CD4-positive, alpha-beta memory T cell (primary cell): ENCODE measurements at regions of chr12 and their contacts with region 1.

Region 1: DNA sequence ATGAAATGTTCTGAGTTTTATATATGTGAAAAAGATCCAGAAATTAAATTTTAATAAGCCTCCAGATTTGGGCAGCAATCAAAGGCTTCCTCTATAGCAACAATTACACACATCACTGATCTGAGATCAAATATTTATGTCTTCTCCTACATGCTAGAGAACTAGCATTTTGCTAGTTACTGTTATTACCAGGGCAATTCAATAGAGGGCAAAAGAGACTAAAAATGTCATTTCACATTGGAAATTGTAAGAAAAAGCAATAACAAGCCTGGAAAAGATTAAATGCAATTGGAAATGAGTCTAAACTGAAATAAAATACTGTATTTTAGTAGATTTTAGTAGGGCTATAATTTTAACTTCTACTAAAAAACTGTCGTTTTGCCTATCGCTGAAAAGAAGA is 32.6 kb upstream of the ANO6 start:
- DNase-seq: no peak
- H3K4me3 ChIP-seq: no peak overlapping the region
- H3K4me3 Mint-ChIP-seq: no peak overlapping the region
- H3K27ac ChIP-seq: no peak overlapping the region
- H3K27ac Mint-ChIP-seq: no peak overlapping the region
- H3K4me1 ChIP-seq: no peaks in the 10 kb centered on the region
- H3K4me1 Mint-ChIP-seq: no peaks in the 10 kb centered on the region
- H3K27me3 ChIP-seq: no peaks in the 10 kb centered on the region
- H3K27me3 Mint-ChIP-seq: no peaks in the 10 kb centered on the region

Region 2: GRCh38 chr12:45148006-45148405 is 35.2 kb before region 1 on chr12:
- CTCF ChIA-PET with region 1: no interaction called
- POLR2A ChIA-PET with region 1: no interaction called
- intact Hi-C with region 1: no loop called
- DNase-seq: no peak
- H3K4me3 ChIP-seq: no peak overlapping the region
- H3K4me3 Mint-ChIP-seq: no peak overlapping the region
- H3K27ac ChIP-seq: no peak overlapping the region
- H3K27ac Mint-ChIP-seq: no peak overlapping the region
- H3K4me1 ChIP-seq: no peaks in the 10 kb centered on the region
- H3K4me1 Mint-ChIP-seq: no peaks in the 10 kb centered on the region
- H3K27me3 ChIP-seq: no peaks in the 10 kb centered on the region
- H3K27me3 Mint-ChIP-seq: peaks cover 0 to 12% of the 10 kb centered on the region in 2 donors

Region 3: GRCh38 chr12:45170456-45171042 is 12.7 kb before region 1 on chr12:
- CTCF ChIA-PET with region 1: interaction called, 10 read pairs
- POLR2A ChIA-PET with region 1: no interaction called
- intact Hi-C with region 1: no loop called
- DNase-seq: peak; percentile 58 to 66 (median 63)
- H3K4me3 ChIP-seq: no peak overlapping the region
- H3K4me3 Mint-ChIP-seq: no peak overlapping the region
- H3K27ac ChIP-seq: no peak overlapping the region
- H3K27ac Mint-ChIP-seq: peak overlapping the region in 1 of 7 donors; percentile 7
- H3K4me1 ChIP-seq: no peaks in the 10 kb centered on the region
- H3K4me1 Mint-ChIP-seq: no peaks in the 10 kb centered on the region
- H3K27me3 ChIP-seq: no peaks in the 10 kb centered on the region
- H3K27me3 Mint-ChIP-seq: peaks cover 0 to 1% of the 10 kb centered on the region in 2 donors

Region 4: GRCh38 chr12:45324391-45324790 is 141.1 kb after region 1 on chr12:
- CTCF ChIA-PET with region 1: no interaction called
- POLR2A ChIA-PET with region 1: no interaction called
- intact Hi-C with region 1: no loop called
- DNase-seq: no peak
- H3K4me3 ChIP-seq: no peak overlapping the region
- H3K4me3 Mint-ChIP-seq: no peak overlapping the region
- H3K27ac ChIP-seq: no peak overlapping the region
- H3K27ac Mint-ChIP-seq: no peak overlapping the region
- H3K4me1 ChIP-seq: no peaks in the 10 kb centered on the region
- H3K4me1 Mint-ChIP-seq: peaks cover 12 to 17% (median 15%) of the 10 kb centered on the region in 4 donors
- H3K27me3 ChIP-seq: no peaks in the 10 kb centered on the region
- H3K27me3 Mint-ChIP-seq: no peaks in the 10 kb centered on the region